A549 (cell line): ENCODE measurements at regions of chr19 and their contacts with region 1.

Region 1: GRCh38 chr19:41144403-41144802 is 30.2 kb downstream of the CYP2F1 start:
- DNase-seq: peak; percentile 85 to 94
- ATAC-seq: peak; percentile 94
- H3K4me3 ChIP-seq: no peak overlapping the region
- H3K27ac ChIP-seq: no peak overlapping the region; a peak in 1 of 6 replicates
- H3K4me1 ChIP-seq: no peaks in the 10 kb centered on the region
- CTCF ChIP-seq: peak; percentile 99
- EP300 ChIP-seq: no peak
- POLR2A ChIP-seq: no peak
- RAD21 ChIP-seq: peak; percentile 99 to 100

Region 2: DNA sequence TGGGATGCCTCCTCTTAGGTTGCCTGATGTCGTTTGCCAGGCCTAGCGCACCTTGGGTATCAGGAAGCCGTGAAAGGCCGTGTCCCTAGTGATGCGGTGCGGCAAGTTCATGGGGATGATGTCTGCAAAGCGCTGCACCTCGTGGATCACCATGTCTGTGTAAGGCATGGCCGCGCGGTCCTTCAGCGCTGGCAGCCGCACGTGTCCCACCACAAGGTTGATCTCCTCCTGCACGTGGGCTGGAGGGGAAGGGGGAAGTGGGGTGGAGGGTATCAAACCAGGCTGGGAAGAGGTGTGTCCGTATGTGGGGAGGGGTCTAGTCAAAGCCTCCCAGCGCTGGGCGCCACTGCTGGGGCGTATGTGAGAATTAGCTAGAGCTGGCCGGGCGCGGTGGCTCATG is 322.2 kb before region 1 on chr19:
- CTCF ChIA-PET with region 1: interaction called, 12 read pairs
- POLR2A ChIA-PET with region 1: no interaction called
- DNase-seq: no peak
- ATAC-seq: no peak
- H3K4me3 ChIP-seq: no peak overlapping the region
- H3K27ac ChIP-seq: peak overlapping the region in 1 of 2 experiments; percentile 31; a peak in 2 of 6 replicates
- H3K4me1 ChIP-seq: peaks cover 39% of the 10 kb centered on the region
- CTCF ChIP-seq: no peak
- EP300 ChIP-seq: no peak
- POLR2A ChIP-seq: no peak
- RAD21 ChIP-seq: no peak

Region 3: GRCh38 chr19:40990972-40991381 is 153.4 kb before region 1 on chr19 and contains the start of gene CYP2B6:
- CTCF ChIA-PET with region 1: interaction called, 12 read pairs
- POLR2A ChIA-PET with region 1: no interaction called
- DNase-seq: no peak
- ATAC-seq: peak in 1 of 2 experiments; percentile 34; a peak in 4 of 6 replicates
- H3K4me3 ChIP-seq: no peak within 1 kb of the TSS
- H3K27ac ChIP-seq: no peak within 1 kb of the TSS
- H3K4me1 ChIP-seq: peaks cover 5% of the 10 kb centered on the region; the same call in 1 of the 3 replicates
- CTCF ChIP-seq: no peak
- EP300 ChIP-seq: no peak
- POLR2A ChIP-seq: no peak
- RAD21 ChIP-seq: no peak
- polyA plus RNA-seq, gene CYP2B6: 0.04 TPM in 1 of 2 replicates, not detected in the other

Region 4: DNA sequence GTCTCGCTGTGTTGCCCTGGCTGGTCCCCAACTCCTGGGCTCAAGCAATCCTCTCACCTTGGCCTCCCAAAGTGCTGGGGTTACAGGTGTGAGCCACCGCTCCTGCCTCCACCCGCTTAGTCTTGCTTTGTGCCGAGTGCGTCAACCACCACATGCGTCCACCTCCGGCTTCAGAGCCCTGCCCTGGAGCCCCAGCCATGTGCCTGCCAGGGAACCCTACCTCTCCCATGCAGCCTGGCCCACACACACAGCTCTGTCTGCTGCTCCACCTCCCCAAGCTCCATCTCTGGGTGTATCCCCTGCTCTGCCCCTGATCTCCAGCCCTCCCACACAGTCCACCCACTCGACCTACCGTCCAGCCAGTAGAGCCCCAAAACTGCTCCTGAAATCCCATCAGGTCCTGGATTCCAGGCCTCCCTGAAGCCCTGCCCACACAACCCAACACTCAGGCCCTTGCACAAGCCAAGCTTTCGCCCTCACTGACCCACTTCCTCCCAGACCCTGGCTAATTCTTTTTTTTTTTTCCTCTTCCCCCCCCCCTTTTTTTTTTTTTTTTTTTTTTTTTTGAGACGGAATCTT is 20.6 kb before region 1 on chr19:
- CTCF ChIA-PET with region 1: interaction called, 56 read pairs
- POLR2A ChIA-PET with region 1: no interaction called
- DNase-seq: no peak
- ATAC-seq: no peak
- H3K4me3 ChIP-seq: no peak overlapping the region
- H3K27ac ChIP-seq: no peak overlapping the region
- H3K4me1 ChIP-seq: peaks cover 10% of the 10 kb centered on the region
- CTCF ChIP-seq: no peak
- EP300 ChIP-seq: no peak
- POLR2A ChIP-seq: no peak
- RAD21 ChIP-seq: no peak

Region 5: DNA sequence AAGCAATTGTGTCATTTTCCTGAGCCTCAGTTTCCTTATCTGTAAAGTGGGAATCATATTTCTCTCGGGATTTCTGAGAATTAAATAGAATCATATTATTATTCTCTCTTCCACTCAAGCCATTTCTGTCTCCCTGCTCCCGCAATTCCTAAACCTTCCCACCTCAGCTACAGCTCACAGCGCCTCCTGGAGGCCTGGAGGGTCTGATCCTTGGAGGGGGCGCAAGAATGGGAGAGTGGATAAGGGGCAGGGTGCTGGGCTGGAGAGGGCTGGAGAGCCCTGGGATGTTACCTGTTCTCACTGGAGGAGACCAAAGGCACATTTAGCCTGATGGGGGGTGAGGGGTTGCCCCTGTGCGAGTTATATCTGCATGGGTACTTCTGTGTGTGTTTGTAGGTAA is 17.5 kb after region 1 on chr19:
- CTCF ChIA-PET with region 1: interaction called, 49 read pairs
- POLR2A ChIA-PET with region 1: no interaction called
- DNase-seq: peak in 1 of 2 experiments; percentile 74
- ATAC-seq: peak in 1 of 2 experiments; percentile 20; a peak in 3 of 6 replicates
- H3K4me3 ChIP-seq: no peak overlapping the region
- H3K27ac ChIP-seq: no peak overlapping the region
- H3K4me1 ChIP-seq: peaks cover 19% of the 10 kb centered on the region
- CTCF ChIP-seq: peak; percentile 40
- EP300 ChIP-seq: no peak
- POLR2A ChIP-seq: no peak
- RAD21 ChIP-seq: peak in 1 of 2 experiments; percentile 20; a peak in 1 of 5 replicates

Region 6: DNA sequence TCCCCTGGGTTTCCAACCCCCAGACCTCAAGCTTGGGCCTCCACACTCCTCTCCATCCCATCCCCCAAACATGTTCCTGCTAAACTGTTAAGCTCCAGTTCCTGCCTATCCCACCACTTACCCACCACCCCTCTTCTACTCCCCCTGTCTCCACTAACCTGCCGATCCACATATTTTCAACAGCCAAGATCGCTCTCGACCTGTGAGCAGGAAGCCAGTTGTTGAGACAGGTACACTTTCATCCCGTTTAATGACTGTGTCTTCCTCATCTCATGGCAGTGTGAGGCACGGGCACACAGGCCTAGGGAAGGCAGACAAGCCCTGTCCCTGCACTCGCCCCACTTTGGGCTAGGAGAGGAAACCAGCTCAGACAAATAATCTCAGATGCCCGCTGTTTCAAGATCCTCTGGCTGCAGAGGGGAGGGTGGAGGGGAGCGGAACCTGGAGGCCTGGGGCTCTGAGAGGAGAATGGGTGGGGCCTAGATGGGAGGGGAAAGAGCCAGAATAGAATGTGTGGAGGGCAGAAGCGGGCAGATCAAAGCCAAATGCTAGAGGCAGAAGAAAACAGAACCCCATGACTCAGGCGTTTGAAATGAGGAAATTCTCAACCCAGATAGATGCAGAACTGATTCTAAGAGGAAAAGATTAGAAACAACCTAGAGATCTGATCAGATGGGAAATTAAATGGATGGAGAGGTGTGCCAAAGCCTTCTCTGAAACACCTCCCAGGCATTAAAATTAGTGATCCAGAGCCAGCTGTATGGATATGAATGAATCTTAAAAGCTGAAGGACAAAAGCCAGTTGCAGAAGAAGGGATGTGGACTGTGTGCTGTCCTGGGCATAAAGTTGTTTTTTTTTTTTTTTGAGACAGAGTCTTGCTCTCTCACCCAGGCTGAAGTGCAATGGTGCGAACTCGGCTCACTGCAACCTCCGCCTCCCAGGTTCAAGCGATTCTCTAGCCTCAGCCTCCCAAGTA is 31.7 kb after region 1 on chr19:
- CTCF ChIA-PET with region 1: interaction called, 11 read pairs
- POLR2A ChIA-PET with region 1: interaction called, 4 read pairs
- DNase-seq: peak; percentile 98 to 100
- ATAC-seq: peak; percentile 96 to 98
- H3K4me3 ChIP-seq: peak overlapping the region; percentile 40
- H3K27ac ChIP-seq: peak overlapping the region; percentile 85 to 87
- H3K4me1 ChIP-seq: peaks cover 35% of the 10 kb centered on the region
- CTCF ChIP-seq: no peak
- EP300 ChIP-seq: peak in 1 of 2 experiments; percentile 61; a peak in 2 of 5 replicates
- POLR2A ChIP-seq: no peak
- RAD21 ChIP-seq: no peak; a peak in 2 of 5 replicates

Region 7: GRCh38 chr19:41226053-41226873 is 81.9 kb after region 1 on chr19:
- CTCF ChIA-PET with region 1: no interaction called
- POLR2A ChIA-PET with region 1: no interaction called
- DNase-seq: peak; percentile 95 to 97
- ATAC-seq: peak; percentile 73 to 77
- H3K4me3 ChIP-seq: peak overlapping the region; percentile 41
- H3K27ac ChIP-seq: peak overlapping the region; percentile 91 to 95
- H3K4me1 ChIP-seq: peaks cover 64% of the 10 kb centered on the region
- CTCF ChIP-seq: no peak
- EP300 ChIP-seq: peak; percentile 72 to 93; a peak in 3 of 5 replicates
- POLR2A ChIP-seq: no peak; the same call in 1 of the 2 replicates
- RAD21 ChIP-seq: peak in 1 of 2 experiments; percentile 36; a peak in 3 of 5 replicates